ENCODE measurements at regions of chr13 and their contacts with region 1.

Region 1: DNA sequence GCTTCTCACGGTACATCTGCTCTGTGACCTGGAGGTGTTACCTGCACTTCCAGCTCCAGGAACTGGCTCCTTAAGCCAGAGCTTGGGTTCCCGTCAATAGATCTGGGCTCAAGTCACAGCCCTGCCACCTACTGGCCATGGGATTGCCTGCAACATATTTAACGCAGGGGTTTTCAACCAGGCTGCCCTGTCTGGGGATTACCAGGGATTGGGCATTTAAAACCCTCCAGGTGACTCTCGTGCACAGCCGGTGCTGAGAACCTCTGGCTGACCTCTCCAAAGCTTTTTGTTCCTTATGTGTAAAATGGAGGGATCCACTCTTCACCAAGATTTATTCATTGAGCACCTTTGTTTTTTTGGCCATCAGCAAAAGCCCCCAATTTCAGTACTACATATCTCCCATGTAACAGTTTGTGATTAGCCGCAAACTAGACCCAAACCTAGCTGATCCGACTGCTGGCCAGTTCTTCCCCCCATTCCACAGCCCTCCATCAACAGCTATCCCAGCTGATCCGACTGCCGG is 76.6 kb upstream of the STK24 start:
- DNase-seq: peak; percentile 78
- ATAC-seq: peak; percentile 85
- H3K4me3 ChIP-seq: no peak overlapping the region
- H3K4me3 Mint-ChIP-seq: peak overlapping the region; percentile 44
- H3K27ac ChIP-seq: no peak overlapping the region
- H3K27ac Mint-ChIP-seq: peak overlapping the region; percentile 42
- H3K4me1 ChIP-seq: peaks cover 0 to 5% of the 10 kb centered on the region in 2 donors
- H3K4me1 Mint-ChIP-seq: peaks cover 5% of the 10 kb centered on the region
- H3K27me3 ChIP-seq: peaks cover 0 to 3% (median 2%) of the 10 kb centered on the region in 4 experiments
- H3K27me3 Mint-ChIP-seq: peaks cover 7% of the 10 kb centered on the region
- CTCF ChIP-seq: peak; percentile 87

Region 2: DNA sequence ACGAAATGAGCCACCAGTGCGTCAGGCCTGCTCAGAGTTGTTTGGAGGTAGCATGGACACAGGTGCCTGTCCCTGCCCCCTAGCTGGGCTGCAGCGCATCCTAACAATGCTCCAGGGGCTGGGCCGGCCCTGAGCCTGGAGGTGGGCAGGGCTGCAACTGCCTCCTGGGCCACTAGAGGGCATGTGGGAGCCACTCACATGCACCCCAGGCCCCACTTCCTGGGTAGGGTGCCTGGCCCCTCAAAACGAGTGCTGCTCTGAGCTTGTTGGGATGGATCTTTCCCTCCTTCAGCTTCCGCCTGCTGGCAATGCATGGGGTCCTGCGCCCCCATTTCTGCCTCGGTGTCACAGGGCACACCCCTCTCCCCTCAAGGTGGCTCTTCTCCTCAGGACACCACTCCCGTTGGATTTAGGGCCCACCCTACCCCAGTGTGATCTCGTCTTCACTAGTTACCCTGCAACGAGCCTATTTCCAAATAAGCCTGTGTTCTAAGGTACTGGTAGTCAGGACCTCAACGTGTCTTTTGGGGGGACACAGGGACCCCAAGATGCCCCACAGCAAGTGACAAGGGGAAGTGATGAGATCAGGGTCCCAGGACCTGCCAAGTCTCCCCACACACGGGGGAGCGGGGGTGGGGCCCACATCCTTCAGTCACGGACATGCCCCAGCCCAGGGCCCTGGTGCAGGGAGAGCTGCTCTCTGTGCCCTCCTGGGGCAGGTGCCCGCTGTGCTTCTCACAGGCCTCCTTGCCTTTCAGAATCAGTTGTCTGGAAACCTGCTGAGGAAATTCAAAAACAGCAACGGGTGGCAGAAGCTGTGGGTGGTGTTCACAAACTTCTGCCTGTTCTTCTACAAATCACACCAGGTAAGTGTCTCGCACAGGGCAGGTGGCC is 207.9 kb before region 1 on chr13:
- CTCF ChIA-PET with region 1: interaction called, 268 read pairs
- POLR2A ChIA-PET with region 1: interaction called, 3 read pairs
- intact Hi-C with region 1: loop called (anchors 1 kb)
- DNase-seq: peak; percentile 83
- ATAC-seq: peak; percentile 98
- H3K4me3 ChIP-seq: peak overlapping the region in 2 of 5 experiments; percentile 19 to 30
- H3K4me3 Mint-ChIP-seq: peak overlapping the region; percentile 58
- H3K27ac ChIP-seq: peak overlapping the region; percentile 52 to 69
- H3K27ac Mint-ChIP-seq: peak overlapping the region; percentile 81
- H3K4me1 ChIP-seq: peaks cover 9 to 12% of the 10 kb centered on the region in 2 donors
- H3K4me1 Mint-ChIP-seq: peaks cover 11% of the 10 kb centered on the region
- H3K27me3 ChIP-seq: no peaks in the 10 kb centered on the region
- H3K27me3 Mint-ChIP-seq: no peaks in the 10 kb centered on the region
- CTCF ChIP-seq: peak; percentile 99

Region 3: DNA sequence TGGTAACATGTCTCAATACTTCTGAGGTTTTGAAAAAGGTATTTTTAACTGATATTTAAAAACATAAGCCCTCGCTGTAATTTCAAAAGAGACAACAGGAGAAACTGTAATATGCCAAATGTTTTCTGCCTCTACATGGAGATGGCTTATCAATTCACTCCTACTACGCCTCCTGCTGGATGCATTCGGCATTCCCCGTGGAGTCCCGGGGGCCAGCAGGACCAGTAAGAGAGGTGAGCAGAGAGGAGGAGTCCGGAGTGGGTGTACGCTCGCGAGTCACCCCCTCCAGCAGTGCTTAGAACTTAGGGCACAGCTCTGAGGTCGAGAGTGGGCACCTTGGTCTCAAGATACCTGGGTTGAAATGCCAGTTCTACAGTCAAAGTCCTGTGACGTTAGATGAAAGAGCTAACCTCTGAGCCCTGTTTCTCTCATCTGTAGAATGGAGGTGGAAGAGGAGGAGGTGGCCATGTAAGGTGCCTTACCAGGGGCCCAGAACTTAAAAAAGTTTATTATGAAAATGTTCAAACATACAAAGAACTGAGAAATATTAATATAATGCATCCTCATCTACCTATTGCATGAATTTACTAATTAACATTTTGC is 186.8 kb before region 1 on chr13:
- CTCF ChIA-PET with region 1: interaction called, 20 read pairs
- POLR2A ChIA-PET with region 1: no interaction called
- intact Hi-C with region 1: no loop called
- DNase-seq: peak; percentile 39
- ATAC-seq: no peak
- H3K4me3 ChIP-seq: no peak overlapping the region
- H3K4me3 Mint-ChIP-seq: no peak overlapping the region
- H3K27ac ChIP-seq: no peak overlapping the region
- H3K27ac Mint-ChIP-seq: no peak overlapping the region
- H3K4me1 ChIP-seq: no peaks in the 10 kb centered on the region
- H3K4me1 Mint-ChIP-seq: no peaks in the 10 kb centered on the region
- H3K27me3 ChIP-seq: no peaks in the 10 kb centered on the region
- H3K27me3 Mint-ChIP-seq: no peaks in the 10 kb centered on the region
- CTCF ChIP-seq: peak; percentile 61

Region 4: DNA sequence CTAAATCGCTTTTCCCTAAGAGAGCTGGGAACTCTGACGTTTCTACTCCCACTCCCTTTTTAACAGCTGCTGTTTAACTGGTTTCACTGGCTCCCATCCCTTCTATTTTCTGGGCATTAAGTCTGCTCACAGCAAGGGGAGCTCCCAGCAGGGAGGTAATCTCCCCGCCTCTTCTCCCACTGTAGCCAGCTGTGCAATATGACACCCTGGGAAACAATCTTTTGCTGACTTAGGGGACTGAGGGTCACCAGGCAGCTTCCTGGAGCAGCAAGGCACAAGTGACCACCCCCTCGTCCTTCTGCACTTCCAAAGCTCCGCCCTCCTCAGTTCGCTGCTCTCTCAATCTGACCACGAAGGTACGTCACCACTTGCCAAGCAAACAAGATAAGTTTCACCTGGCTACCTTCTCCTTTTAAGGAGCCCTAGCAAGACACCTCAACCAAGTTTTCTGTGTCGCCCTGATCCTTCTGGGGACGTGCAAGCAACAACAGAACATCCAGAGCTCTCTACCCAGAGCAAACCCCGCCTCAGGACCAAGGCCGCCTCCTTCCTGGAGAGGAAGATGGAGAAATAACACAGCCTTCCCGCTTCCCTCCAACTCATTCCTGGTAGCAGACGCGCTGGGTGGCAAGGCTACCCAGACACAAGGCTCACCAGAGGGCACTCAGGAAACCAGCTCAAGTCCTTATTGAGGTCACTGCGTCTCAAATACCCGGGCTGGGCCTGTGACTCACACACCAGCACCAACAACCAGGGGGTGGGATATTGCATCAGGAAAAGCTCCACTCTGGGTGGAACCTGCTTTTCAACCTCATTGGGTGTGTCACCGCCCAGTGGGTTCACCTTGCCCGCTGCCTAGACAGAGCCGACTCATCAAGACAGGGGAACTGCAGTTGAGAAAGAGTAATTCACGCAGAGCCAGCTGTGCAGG is 169.0 kb before region 1 on chr13:
- CTCF ChIA-PET with region 1: interaction called, 40 read pairs
- POLR2A ChIA-PET with region 1: no interaction called
- intact Hi-C with region 1: no loop called
- DNase-seq: no peak
- ATAC-seq: no peak
- H3K4me3 ChIP-seq: no peak overlapping the region
- H3K4me3 Mint-ChIP-seq: no peak overlapping the region
- H3K27ac ChIP-seq: no peak overlapping the region
- H3K27ac Mint-ChIP-seq: peak overlapping the region; percentile 10
- H3K4me1 ChIP-seq: peaks cover 39 to 69% of the 10 kb centered on the region in 2 donors
- H3K4me1 Mint-ChIP-seq: peaks cover 80% of the 10 kb centered on the region
- H3K27me3 ChIP-seq: no peaks in the 10 kb centered on the region
- H3K27me3 Mint-ChIP-seq: no peaks in the 10 kb centered on the region
- CTCF ChIP-seq: no peak

Region 5: DNA sequence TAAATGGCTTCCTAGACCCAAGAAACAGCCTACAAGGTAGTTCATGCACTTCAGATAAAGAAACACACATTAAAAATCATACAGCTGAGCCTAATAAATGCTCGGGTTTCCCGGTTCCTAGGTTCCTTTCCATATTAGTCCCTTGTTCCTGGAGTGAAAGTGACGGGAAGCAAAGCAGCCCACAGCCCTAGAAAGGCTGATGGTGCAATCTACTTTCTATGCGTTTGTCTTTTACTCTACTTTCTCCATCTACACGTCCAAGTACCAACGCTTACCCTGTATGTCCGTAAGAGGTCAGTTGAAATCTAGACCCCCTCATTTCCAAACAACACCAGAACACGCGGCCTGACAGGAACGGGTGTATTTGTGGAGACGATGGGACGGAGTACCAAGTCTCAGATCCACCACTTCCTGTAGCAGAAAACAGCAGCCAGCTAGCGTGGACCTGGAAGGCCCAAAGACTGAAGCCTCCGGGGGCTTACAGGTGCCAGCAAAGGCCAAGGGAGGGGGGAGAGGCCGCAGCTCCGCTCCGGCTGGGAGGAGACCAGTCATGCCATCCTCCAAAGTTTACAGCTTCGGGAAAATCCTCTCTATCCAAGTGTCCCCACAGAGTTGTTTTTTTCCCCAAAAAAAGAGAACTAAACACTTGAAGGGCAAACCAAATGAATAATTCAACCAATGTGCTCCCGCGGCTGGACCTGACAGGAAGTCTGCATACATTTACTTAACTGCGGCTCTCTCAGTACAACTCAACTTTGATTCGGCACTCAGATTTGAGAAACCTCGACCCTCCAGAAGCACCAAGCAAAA is 110.8 kb before region 1 on chr13:
- CTCF ChIA-PET with region 1: interaction called, 13 read pairs
- POLR2A ChIA-PET with region 1: no interaction called
- intact Hi-C with region 1: no loop called
- DNase-seq: peak; percentile 46
- ATAC-seq: peak; percentile 50
- H3K4me3 ChIP-seq: peak overlapping the region; percentile 1 to 58 (median 27)
- H3K4me3 Mint-ChIP-seq: peak overlapping the region; percentile 81
- H3K27ac ChIP-seq: peak overlapping the region; percentile 25 to 55
- H3K27ac Mint-ChIP-seq: peak overlapping the region; percentile 73
- H3K4me1 ChIP-seq: peaks cover 42 to 44% of the 10 kb centered on the region in 2 donors
- H3K4me1 Mint-ChIP-seq: peaks cover 87% of the 10 kb centered on the region
- H3K27me3 ChIP-seq: no peaks in the 10 kb centered on the region
- H3K27me3 Mint-ChIP-seq: no peaks in the 10 kb centered on the region
- CTCF ChIP-seq: no peak

Region 6: GRCh38 chr13:98576963-98577822 is 76.3 kb before region 1 on chr13 and contains the start of gene STK24:
- CTCF ChIA-PET with region 1: interaction called, 5 read pairs
- POLR2A ChIA-PET with region 1: no interaction called
- intact Hi-C with region 1: loop called (anchors 5 kb)
- DNase-seq: peak; percentile 80
- ATAC-seq: peak; percentile 83
- H3K4me3 ChIP-seq: peak within 1 kb of the TSS; percentile 51 to 88 (median 72)
- H3K4me3 Mint-ChIP-seq: peak within 1 kb of the TSS; percentile 95
- H3K27ac ChIP-seq: peak within 1 kb of the TSS; percentile 67 to 87
- H3K27ac Mint-ChIP-seq: peak within 1 kb of the TSS; percentile 95
- H3K4me1 ChIP-seq: peaks cover 38 to 39% of the 10 kb centered on the region in 2 donors
- H3K4me1 Mint-ChIP-seq: peaks cover 37% of the 10 kb centered on the region
- H3K27me3 ChIP-seq: no peaks in the 10 kb centered on the region
- H3K27me3 Mint-ChIP-seq: no peaks in the 10 kb centered on the region
- CTCF ChIP-seq: no peak
- total RNA-seq, gene STK24: 117 and 120 TPM in 2 replicates

Region 7: GRCh38 chr13:98672944-98673545 is 19.5 kb after region 1 on chr13:
- CTCF ChIA-PET with region 1: interaction called, 44 read pairs
- POLR2A ChIA-PET with region 1: interaction called, 3 read pairs
- intact Hi-C with region 1: no loop called
- DNase-seq: peak; percentile 68
- ATAC-seq: peak; percentile 53
- H3K4me3 ChIP-seq: no peak overlapping the region
- H3K4me3 Mint-ChIP-seq: no peak overlapping the region
- H3K27ac ChIP-seq: no peak overlapping the region
- H3K27ac Mint-ChIP-seq: no peak overlapping the region
- H3K4me1 ChIP-seq: peaks cover 0 to 3% of the 10 kb centered on the region in 2 donors
- H3K4me1 Mint-ChIP-seq: no peaks in the 10 kb centered on the region
- H3K27me3 ChIP-seq: no peaks in the 10 kb centered on the region
- H3K27me3 Mint-ChIP-seq: peaks cover 12% of the 10 kb centered on the region
- CTCF ChIP-seq: peak; percentile 83

Measured in B cell (primary cell).